Astrocyte of the spinal cord (primary cell): ENCODE measurements at regions of chr1 and their contacts with region 1.

Region 1: DNA sequence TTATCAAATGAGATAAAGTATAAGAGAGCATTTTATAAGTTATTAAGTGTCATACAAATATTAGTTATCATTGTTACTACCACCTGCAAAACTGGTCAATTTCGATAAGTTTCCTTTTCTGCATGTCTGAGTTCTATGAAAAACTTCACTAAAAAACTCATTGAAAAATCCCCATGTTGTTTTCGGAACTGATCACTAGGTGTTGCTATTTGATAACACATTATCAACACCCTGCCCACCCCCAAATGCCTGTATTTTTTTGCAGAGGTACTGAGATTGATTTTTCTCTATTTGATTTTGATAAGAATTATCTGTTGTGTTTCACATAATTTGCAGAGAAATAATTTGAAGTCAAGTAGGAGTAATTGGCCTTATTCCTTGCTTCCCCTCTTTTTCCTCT is 22.1 kb upstream of the DISP1 start:
- DNase-seq: peak; percentile 29
- H3K4me3 ChIP-seq: no peak overlapping the region
- CTCF ChIP-seq: peak; percentile 41

Region 2: GRCh38 chr1:223081181-223081994 is 288.6 kb after region 1 on chr1:
- in situ Hi-C with region 1: loop called (anchors 25 kb)
- DNase-seq: peak; percentile 84
- H3K4me3 ChIP-seq: peak overlapping the region; percentile 36
- CTCF ChIP-seq: peak; percentile 89